Activated T-helper 2 cell treated with anti-CD3 and anti-CD28 coated beads, Interferon-gamma antibody, Interleukin-2, Interleukin-4, amounts not matched to agents 10 μg/mL and 5 μg/mL and 100 μg/mL, durations not matched to agents 14 hours and 24 hours and 36 hours (primary cell): ENCODE measurements at regions of chr16 and their contacts with region 1.

Region 1: GRCh38 chr16:83826146-83826913 is 18.6 kb downstream of the HSBP1 start:
- DNase-seq: peak; percentile 72
- H3K4me3 Mint-ChIP-seq: no peak overlapping the region
- H3K27ac Mint-ChIP-seq: no peak overlapping the region
- H3K4me1 Mint-ChIP-seq: peaks cover 6% of the 10 kb centered on the region
- H3K27me3 Mint-ChIP-seq: no peaks in the 10 kb centered on the region

Region 2: GRCh38 chr16:84065536-84066132 is 239.3 kb after region 1 on chr16:
- intact Hi-C with region 1: loop called (anchors 5 kb)
- DNase-seq: no peak
- H3K4me3 Mint-ChIP-seq: no peak overlapping the region
- H3K27ac Mint-ChIP-seq: no peak overlapping the region
- H3K4me1 Mint-ChIP-seq: peaks cover 3% of the 10 kb centered on the region
- H3K27me3 Mint-ChIP-seq: no peaks in the 10 kb centered on the region